ENCODE measurements at regions of chr9 and their contacts with region 1.

Region 1: DNA sequence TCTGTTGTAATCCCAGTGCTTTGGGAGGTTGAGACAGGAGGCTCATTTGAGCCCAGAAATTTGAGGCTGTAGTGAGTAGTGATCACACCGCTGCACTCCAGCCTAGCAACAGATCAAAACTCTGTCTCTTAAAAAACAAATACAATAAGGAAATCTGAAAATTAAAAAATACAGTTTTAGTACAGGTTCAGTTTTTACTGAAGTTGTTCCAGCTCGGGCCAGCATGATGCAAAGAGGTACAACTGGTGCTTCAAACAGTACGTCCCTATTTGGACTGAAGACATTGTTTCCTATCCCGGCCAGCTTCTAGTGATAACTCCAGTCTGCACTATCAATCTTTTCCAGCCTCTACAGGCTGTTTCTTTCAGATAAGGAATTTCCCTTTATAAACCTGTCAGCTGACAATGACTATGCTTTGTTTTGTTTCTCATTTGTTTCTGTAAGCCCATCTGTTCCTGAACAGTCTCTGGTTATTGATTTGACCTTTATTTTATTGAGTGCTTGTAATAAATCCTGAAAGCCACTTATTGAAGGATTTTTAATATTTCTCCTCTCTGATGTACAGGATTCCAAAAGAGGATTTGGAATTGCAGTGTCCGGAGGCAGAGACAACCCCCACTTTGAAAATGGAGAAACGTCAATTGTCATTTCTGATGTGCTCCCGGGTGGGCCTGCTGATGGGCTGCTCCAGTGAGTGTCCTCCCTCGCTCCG is 41.9 kb downstream of the TJP2 start:
- DNase-seq: peak in 4 of 5 donors; percentile 31 to 38 (median 36)
- ATAC-seq: peak; percentile 90 to 93 (median 90)
- H3K4me3 ChIP-seq: peak overlapping the region in 1 of 12 donors; percentile 27
- H3K27ac ChIP-seq: peak overlapping the region; percentile 35 to 95 (median 82)
- H3K4me1 ChIP-seq: peaks cover 0 to 56% (median 18%) of the 10 kb centered on the region in 12 donors
- H3K27me3 ChIP-seq: no peaks in the 10 kb centered on the region
- CTCF ChIP-seq: no peak
- POLR2A ChIP-seq: peak in 1 of 2 donors; percentile 15

Region 2: GRCh38 chr9:69376651-69377050 is 160.7 kb after region 1 on chr9:
- intact Hi-C with region 1: loop called in 3 of 10 experiments (anchors 5 to 10 kb)
- DNase-seq: peak in 4 of 5 donors; percentile 44 to 71 (median 52)
- ATAC-seq: peak; percentile 81 to 91 (median 84)
- H3K4me3 ChIP-seq: no peak overlapping the region
- H3K27ac ChIP-seq: peak overlapping the region in 11 of 12 donors; percentile 19 to 88 (median 46)
- H3K4me1 ChIP-seq: peaks cover 0 to 63% (median 37%) of the 10 kb centered on the region in 12 donors
- H3K27me3 ChIP-seq: no peaks in the 10 kb centered on the region
- CTCF ChIP-seq: no peak
- POLR2A ChIP-seq: no peak

Region 3: DNA sequence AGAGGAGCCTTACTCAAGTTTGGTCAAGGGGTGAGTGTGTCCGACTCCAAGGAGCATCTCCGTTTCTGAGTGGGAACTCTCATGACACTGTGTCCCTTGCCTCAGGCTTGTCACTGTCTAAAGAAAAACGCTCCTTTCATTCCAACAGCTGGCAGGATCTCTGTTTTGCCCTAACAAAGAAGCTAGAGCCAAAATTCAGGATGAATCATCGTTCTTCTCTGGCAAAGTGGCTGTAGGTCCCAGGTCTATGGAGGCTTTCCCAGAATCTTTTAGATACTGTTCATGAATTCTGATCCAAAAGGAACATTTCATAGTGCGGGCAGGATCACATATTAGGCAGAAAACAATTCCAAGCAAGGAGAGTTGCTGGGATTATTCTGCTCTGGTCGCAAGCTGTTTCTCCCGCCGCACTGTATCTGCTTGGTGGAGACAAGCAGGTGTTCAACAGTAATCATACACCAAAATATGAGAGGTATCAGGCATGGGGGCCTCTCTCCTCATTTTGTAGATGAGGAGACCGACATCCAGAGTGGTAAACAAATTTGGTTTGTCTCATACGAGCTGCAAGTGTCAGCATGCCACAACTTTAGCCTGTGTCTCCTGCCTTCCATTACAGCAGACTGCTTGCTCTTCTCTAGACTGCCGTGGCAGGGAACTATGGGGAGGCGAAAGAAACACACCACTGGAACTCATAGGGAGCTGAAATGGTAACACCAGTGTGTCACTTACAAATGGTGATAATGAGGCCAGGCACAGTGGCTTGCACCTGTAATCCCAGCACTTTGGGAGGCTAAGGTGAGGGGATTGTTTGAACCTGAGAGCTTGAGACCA is 181.7 kb after region 1 on chr9:
- intact Hi-C with region 1: loop called in 1 of 10 experiments (anchors 10 kb)
- DNase-seq: no peak
- ATAC-seq: peak; percentile 17 to 52 (median 39)
- H3K4me3 ChIP-seq: peak overlapping the region in 1 of 12 donors; percentile 3
- H3K27ac ChIP-seq: peak overlapping the region; percentile 47 to 84 (median 67)
- H3K4me1 ChIP-seq: peaks cover 0 to 24% (median 13%) of the 10 kb centered on the region in 12 donors
- H3K27me3 ChIP-seq: no peaks in the 10 kb centered on the region
- CTCF ChIP-seq: no peak
- POLR2A ChIP-seq: no peak

Measured in heart left ventricle (tissue), 16 donors.